ENCODE measurements at regions of chr4 and their contacts with region 1.

Region 1: DNA sequence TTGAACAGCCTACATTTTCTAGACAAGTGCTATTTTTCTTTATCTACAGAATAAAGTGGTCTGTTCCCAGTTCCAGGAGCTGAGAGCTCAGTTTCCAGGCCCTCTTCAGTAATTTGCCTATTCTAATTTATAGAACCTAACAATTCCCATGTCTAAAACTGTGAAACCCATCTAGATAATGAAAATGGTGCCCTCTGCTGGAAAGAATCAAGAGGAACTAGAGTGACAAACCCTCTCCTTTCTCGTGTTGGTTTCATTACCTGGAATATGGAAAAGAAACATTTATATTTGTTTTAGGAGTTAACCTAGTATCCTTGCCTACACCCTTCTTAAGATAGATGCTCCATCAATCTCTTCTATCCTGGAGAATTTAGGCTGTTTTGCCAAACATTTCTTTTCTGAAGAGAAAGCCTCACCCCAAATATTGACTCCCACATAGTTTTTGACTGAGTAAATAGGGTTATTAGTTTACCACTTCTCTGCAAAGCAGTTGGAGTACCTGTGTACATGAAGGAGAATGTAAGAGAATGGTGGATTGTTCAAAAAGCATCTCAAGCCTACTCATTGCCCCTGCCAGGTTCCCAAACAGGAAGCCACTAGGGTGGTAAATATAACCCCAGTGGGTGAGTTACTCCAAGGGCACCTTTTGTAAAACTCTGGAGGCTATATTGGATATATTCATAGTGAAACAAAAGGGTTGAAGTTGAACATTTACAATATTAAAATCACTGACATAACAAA is 121.6 kb downstream of the RASL11B start:
- DNase-seq: peak; percentile 49
- H3K4me3 ChIP-seq: no peak overlapping the region
- H3K27ac ChIP-seq: no peak overlapping the region
- H3K4me1 ChIP-seq: no peaks in the 10 kb centered on the region
- H3K27me3 ChIP-seq: no peaks in the 10 kb centered on the region
- CTCF ChIP-seq: peak; percentile 56

Region 2: DNA sequence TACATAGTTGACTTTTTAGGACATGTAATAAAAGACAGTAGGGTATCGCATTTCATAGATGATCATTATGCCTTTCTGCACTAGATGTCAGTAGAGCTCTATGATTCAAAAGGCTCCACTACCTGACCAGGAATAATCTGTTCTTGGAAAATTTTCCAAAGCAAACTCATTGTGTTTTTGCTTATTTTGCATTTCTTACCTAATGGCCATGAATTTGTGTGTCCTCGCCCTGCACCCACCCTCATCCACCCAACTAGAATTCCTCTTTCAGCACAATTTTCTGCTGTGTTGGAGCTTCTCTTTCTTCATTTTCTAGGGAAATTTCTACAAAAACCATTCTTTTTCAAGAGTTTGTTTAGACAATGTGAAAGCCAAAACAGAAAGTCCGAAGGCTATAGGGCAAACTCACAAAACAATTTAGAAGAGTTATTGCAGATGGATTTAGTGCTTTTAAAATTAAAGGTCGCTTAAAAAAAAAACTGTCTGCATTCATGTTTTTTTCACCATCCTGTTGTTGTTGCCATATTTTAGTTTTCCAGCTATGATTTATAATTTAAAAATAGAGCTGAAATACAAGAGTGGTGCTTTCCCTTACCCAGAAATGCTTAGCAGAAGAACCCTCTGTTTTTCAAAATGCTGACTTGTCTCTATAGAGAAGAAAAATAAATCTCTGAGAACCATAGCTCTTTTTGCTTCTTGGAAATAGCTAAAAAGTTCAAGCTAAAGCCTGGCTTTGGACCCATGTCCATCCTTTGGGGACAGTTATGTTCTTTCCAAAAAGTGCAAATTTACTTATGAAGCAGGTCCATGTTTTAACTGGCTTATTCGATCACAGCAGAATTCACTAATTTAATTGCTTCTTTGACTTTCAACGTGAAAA is 748.9 kb before region 1 on chr4:
- CTCF ChIA-PET with region 1: no interaction called
- POLR2A ChIA-PET with region 1: no interaction called
- intact Hi-C with region 1: loop called (anchors 5 kb)
- DNase-seq: peak; percentile 48
- H3K4me3 ChIP-seq: no peak overlapping the region
- H3K27ac ChIP-seq: no peak overlapping the region
- H3K4me1 ChIP-seq: no peaks in the 10 kb centered on the region
- H3K27me3 ChIP-seq: no peaks in the 10 kb centered on the region
- CTCF ChIP-seq: peak; percentile 57

Region 3: GRCh38 chr4:52545099-52546069 is 438.3 kb before region 1 on chr4:
- CTCF ChIA-PET with region 1: interaction called, 6 read pairs
- POLR2A ChIA-PET with region 1: no interaction called
- intact Hi-C with region 1: loop called (anchors 2 kb)
- DNase-seq: peak; percentile 56
- H3K4me3 ChIP-seq: no peak overlapping the region
- H3K27ac ChIP-seq: no peak overlapping the region
- H3K4me1 ChIP-seq: peaks cover 2% of the 10 kb centered on the region
- H3K27me3 ChIP-seq: no peaks in the 10 kb centered on the region
- CTCF ChIP-seq: peak; percentile 67

Region 4: GRCh38 chr4:54233277-54233696 is 1249.6 kb after region 1 on chr4:
- CTCF ChIA-PET with region 1: interaction called, 4 read pairs
- POLR2A ChIA-PET with region 1: no interaction called
- intact Hi-C with region 1: loop called (anchors 10 kb)
- DNase-seq: peak; percentile 79
- H3K4me3 ChIP-seq: peak overlapping the region; percentile 42
- H3K27ac ChIP-seq: no peak overlapping the region
- H3K4me1 ChIP-seq: no peaks in the 10 kb centered on the region
- H3K27me3 ChIP-seq: peaks cover 41% of the 10 kb centered on the region
- CTCF ChIP-seq: peak; percentile 58; the same call in 1 of the 2 replicates